ENCODE measurements at regions of chr7 and their contacts with region 1.

Region 1: GRCh38 chr7:70856866-70857630 is 274.9 kb upstream of the GALNT17 start:
- DNase-seq: peak; percentile 60
- H3K4me3 ChIP-seq: no peak overlapping the region
- H3K27ac ChIP-seq: no peak overlapping the region
- H3K4me1 ChIP-seq: no peaks in the 10 kb centered on the region
- H3K27me3 ChIP-seq: no peaks in the 10 kb centered on the region
- CTCF ChIP-seq: peak; percentile 74 to 90 (median 88)
- EP300 ChIP-seq: no peak
- POLR2A ChIP-seq: no peak

Region 2: DNA sequence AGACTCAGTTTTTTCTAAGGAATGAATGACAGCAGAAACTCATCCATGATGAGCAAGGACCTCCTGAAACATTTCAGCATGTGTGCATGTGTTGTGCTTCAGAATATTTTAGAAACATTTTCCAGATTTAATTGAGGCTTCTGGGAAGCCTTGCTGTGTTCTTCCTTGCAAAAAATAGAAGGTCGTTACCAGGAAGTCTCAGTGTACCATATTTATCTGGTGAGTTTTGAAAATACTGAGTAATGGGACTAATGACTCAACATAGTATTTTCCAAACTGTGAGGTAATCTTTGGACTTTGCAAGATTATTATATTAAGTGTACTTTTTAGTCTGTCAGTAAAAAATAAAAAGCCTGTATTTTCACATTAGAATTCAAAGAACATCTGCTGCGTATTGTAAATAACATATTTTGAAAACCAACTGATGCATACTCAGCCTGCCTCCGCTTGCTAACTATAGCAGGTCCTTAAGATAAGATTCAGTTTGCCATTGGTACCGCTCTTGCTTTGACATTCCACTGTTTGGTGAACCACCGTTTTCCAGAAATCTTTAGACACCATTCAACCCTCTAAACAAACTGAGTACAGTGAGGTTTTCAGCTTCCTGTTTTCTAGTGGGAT is 464.7 kb before region 1 on chr7:
- in situ Hi-C with region 1: no loop called
- intact Hi-C with region 1: no loop called
- DNase-seq: no peak
- H3K4me3 ChIP-seq: no peak overlapping the region
- H3K27ac ChIP-seq: peak overlapping the region in 1 of 4 donors; percentile 29
- H3K4me1 ChIP-seq: no peaks in the 10 kb centered on the region
- H3K27me3 ChIP-seq: no peaks in the 10 kb centered on the region
- CTCF ChIP-seq: no peak
- EP300 ChIP-seq: no peak
- POLR2A ChIP-seq: no peak

Region 3: GRCh38 chr7:70812511-70812910 is 44.5 kb before region 1 on chr7:
- in situ Hi-C with region 1: no loop called
- intact Hi-C with region 1: loop called (anchors 1 kb)
- DNase-seq: no peak
- H3K4me3 ChIP-seq: no peak overlapping the region
- H3K27ac ChIP-seq: no peak overlapping the region
- H3K4me1 ChIP-seq: no peaks in the 10 kb centered on the region
- H3K27me3 ChIP-seq: peaks cover 5% of the 10 kb centered on the region
- CTCF ChIP-seq: no peak
- EP300 ChIP-seq: no peak
- POLR2A ChIP-seq: no peak

Region 4: GRCh38 chr7:70953331-70953741 is 96.3 kb after region 1 on chr7:
- in situ Hi-C with region 1: no loop called
- intact Hi-C with region 1: no loop called
- DNase-seq: no peak
- H3K4me3 ChIP-seq: no peak overlapping the region
- H3K27ac ChIP-seq: no peak overlapping the region
- H3K4me1 ChIP-seq: no peaks in the 10 kb centered on the region
- H3K27me3 ChIP-seq: no peaks in the 10 kb centered on the region
- CTCF ChIP-seq: no peak
- EP300 ChIP-seq: no peak
- POLR2A ChIP-seq: no peak

Measured in transverse colon (tissue), 4 donors.